Mucosa of descending colon (tissue), 3 donors: ENCODE measurements at regions of chr16 and their contacts with region 1.

Region 1: GRCh38 chr16:27235055-27235937 is 32.0 kb downstream of the KDM8 start:
- DNase-seq: peak; percentile 91 to 95 (median 92)
- ATAC-seq: peak; percentile 56
- H3K4me3 ChIP-seq: no peak overlapping the region
- H3K4me1 ChIP-seq: peaks cover 74% of the 10 kb centered on the region
- CTCF ChIP-seq: peak; percentile 44

Region 2: DNA sequence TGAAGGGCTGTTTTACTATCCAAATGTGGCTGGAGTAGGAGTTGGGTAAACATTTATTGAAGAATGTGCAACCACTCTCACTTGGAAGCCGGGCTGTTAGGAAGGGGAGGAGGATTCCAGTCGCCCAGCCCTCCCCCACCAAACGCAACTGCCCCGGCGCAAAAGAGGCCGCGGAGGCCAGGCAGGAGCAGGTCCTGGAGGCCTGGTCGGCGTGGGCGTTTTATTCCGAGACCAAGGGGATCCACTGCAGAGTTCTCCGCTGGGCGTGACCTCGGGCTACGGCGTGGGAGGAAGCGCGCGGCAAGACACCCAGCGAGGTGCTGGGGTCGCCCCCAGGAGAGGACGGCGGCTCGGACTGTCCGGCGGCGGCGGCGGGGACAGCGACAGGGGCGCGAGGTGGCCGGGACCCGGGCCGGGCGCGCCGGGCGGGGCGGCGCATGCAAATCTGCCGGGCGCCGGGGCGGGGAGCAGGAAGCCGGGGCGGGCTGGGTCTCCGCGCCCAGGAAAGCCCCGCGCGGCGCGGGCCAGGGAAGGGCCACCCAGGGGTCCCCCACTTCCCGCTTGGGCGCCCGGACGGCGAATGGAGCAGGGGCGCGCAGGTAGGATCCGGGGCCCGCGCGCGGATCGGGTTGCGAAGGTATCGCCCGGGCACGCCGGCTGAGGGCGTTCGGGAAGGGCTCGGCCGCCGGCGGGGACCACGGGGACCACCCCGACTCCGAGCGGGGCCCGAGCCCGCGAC is 78.3 kb after region 1 on chr16 and contains the start of gene IL4R:
- intact Hi-C with region 1: loop called in 1 of 2 experiments (anchors 10 kb)
- DNase-seq: peak; percentile 81 to 88 (median 87)
- ATAC-seq: peak; percentile 78
- H3K4me3 ChIP-seq: peak within 1 kb of the TSS; percentile 88
- H3K4me1 ChIP-seq: peaks cover 50% of the 10 kb centered on the region
- CTCF ChIP-seq: no peak
- total RNA-seq, gene IL4R: 131 to 207 (median 164) TPM

Region 3: DNA sequence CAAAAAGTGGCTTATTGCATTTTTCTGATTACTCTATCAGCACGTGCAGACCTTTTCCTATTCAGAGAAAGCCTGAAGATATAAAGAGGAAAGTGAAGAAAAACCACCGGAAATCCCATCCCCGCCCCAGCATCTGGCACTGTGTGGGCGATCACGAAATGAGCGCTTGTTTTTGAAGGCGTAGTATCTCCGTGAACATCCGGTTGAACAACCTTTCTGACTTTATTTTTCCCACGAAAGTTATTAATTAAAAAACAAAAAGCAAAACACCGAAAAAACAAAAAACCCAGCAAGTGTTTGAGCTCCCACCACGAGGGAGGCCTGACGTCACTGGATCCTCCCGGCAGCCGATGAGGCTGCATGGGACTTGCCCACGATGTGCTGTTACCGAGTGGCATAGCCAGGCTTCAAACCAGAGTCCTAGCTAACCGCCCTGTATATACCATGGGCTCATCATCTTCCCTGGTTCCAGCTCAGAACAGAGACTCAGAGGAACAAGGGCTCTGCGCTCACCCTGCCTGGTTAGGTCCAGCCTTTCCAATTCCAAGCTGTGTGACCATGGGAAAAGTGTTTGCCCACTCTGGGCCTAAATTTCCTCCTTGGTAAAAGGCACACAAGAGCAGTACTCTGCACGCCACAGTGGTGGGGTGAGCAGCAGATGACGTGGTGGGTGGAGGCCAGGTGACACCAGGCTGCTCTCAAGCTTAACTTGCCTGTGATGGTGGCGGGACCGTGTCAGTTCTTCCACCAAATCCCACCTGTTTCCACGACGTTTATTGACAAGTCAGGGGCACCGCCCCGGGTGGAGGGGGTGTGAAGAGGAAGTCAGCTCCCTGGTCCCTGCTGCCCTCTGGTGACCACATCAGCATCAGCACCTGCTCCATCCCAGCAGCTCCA is 132.4 kb after region 1 on chr16:
- intact Hi-C with region 1: loop called in 1 of 2 experiments (anchors 5 kb)
- DNase-seq: peak; percentile 87 to 92 (median 90)
- ATAC-seq: peak; percentile 82
- H3K4me3 ChIP-seq: no peak overlapping the region
- H3K4me1 ChIP-seq: peaks cover 29% of the 10 kb centered on the region
- CTCF ChIP-seq: peak; percentile 60